GM12878 (cell line): ENCODE measurements at regions of chr15 and their contacts with region 1.

Region 1: DNA sequence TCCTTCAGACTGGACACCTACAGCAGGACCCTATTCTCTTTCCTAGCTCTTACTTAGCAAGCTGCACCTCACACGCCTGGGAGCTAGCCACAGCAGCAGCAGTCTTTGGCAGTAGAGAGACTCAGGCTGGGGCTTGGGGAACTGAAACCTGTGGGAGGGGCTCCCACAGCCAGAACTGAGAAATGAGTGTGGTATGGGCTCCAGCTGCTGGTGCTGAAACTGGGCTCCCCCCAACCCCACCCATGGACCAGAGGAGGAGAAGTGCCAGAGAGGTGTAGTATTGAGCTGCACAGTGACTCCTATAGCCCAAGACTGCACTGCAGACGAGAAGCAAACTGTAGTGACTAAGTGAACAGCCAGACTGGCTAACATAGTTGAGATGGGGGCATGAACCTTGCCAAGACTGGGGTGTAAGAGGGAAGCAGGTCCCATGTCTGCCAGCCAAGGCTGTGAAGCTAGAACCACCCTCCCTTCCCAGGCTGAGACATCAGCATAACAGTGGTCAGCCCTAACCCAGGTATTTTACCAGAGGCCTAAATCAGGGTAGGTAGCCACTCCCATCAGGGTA is 62.5 kb downstream of the MYO5A start:
- DNase-seq: peak; percentile 97
- ATAC-seq: peak; percentile 94
- H3K4me3 ChIP-seq: peak overlapping the region; percentile 58; the same call in 1 of the 2 replicates
- H3K27ac ChIP-seq: peak overlapping the region; percentile 99
- H3K4me1 ChIP-seq: peaks cover 47% of the 10 kb centered on the region
- H3K27me3 ChIP-seq: no peaks in the 10 kb centered on the region
- CTCF ChIP-seq: peak; percentile 55 to 66 (median 66)
- EP300 ChIP-seq: peak; percentile 91 to 98
- POLR2A ChIP-seq: peak; percentile 69
- RAD21 ChIP-seq: peak; percentile 70

Region 2: DNA sequence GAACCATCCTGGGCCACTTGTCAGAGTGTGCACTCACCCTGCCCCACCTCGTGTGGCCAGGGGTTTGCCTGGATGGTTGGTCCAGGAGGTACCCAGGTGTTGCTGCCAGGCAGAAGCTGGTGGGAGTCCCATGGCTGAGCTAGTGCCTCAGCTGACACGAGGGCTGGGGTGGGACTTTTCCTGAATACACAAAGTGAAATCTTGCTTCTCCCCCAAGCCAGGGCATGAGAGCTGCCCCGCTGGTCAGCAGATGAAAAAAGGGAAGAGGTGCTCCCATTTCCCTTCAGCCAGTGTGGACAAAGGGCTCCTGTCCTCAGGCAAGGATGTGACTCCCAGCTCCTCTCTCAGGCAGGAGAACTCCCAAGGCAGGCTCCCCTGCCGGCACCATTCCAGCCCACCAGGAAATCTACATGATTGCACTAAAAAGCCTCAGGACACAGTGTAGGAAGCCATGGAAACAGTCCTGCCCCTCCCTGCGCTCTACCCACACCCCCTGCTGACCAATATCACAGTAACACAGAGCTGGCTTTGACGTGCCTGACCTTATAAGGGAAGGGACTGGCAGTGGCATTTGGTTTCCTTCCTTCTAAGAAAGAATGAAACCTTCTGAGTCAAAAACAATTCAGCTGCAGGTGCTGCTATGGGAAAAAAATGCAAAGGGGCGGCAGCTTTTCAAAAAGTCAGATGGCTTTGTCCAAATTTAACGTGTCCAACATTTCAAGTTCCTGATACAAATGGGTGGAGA is 204.5 kb before region 1 on chr15:
- CTCF ChIA-PET with region 1: interaction called, 98 read pairs
- POLR2A ChIA-PET with region 1: interaction called, 4 read pairs
- RAD21 ChIA-PET with region 1: interaction called, 32 read pairs
- SMC1A ChIA-PET with region 1: interaction called, 30 read pairs
- in situ Hi-C with region 1: no loop called
- intact Hi-C with region 1: loop called (anchors 5 kb)
- DNase-seq: peak; percentile 86
- ATAC-seq: peak; percentile 100
- H3K4me3 ChIP-seq: no peak overlapping the region
- H3K27ac ChIP-seq: peak overlapping the region; percentile 95
- H3K4me1 ChIP-seq: peaks cover 24% of the 10 kb centered on the region
- H3K27me3 ChIP-seq: no peaks in the 10 kb centered on the region
- CTCF ChIP-seq: peak in 2 of 3 experiments; percentile 24 to 25; a peak in 1 of 6 replicates
- EP300 ChIP-seq: 0 out of 4 replicates have a peak, but pooled peaks have one; percentile 31 to 59
- POLR2A ChIP-seq: no peak; the same call in 1 of the 2 replicates
- RAD21 ChIP-seq: no peak

Region 3: DNA sequence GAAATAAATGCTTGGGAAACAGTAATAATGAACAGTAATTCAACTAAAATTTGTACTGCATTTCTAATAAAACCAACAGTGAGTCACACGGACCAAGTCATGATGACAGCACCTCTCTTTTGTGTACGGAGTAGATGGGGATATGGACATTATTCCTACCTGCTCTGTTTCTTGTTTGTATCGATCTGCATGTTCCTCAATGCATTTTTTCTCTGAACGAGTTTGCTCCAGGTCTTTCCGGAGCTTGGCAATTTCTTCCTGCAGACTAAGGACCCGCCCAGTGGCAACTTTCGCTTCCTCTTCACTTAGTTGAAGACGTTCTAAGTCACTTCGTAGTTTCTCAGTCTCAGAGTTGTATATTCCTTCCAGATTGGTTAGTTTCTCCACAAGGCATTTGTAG is 96.2 kb before region 1 on chr15:
- CTCF ChIA-PET with region 1: interaction called, 5 read pairs
- POLR2A ChIA-PET with region 1: interaction called, 3 read pairs
- RAD21 ChIA-PET with region 1: interaction called, 29 read pairs
- SMC1A ChIA-PET with region 1: interaction called, 21 read pairs
- in situ Hi-C with region 1: no loop called
- intact Hi-C with region 1: no loop called
- DNase-seq: no peak
- ATAC-seq: peak; percentile 83
- H3K4me3 ChIP-seq: no peak overlapping the region
- H3K27ac ChIP-seq: peak overlapping the region; percentile 5; the same call in 1 of the 2 replicates
- H3K4me1 ChIP-seq: peaks cover 3% of the 10 kb centered on the region; the same call in 1 of the 2 replicates
- H3K27me3 ChIP-seq: no peaks in the 10 kb centered on the region
- CTCF ChIP-seq: no peak
- EP300 ChIP-seq: no peak
- POLR2A ChIP-seq: no peak
- RAD21 ChIP-seq: no peak

Region 4: DNA sequence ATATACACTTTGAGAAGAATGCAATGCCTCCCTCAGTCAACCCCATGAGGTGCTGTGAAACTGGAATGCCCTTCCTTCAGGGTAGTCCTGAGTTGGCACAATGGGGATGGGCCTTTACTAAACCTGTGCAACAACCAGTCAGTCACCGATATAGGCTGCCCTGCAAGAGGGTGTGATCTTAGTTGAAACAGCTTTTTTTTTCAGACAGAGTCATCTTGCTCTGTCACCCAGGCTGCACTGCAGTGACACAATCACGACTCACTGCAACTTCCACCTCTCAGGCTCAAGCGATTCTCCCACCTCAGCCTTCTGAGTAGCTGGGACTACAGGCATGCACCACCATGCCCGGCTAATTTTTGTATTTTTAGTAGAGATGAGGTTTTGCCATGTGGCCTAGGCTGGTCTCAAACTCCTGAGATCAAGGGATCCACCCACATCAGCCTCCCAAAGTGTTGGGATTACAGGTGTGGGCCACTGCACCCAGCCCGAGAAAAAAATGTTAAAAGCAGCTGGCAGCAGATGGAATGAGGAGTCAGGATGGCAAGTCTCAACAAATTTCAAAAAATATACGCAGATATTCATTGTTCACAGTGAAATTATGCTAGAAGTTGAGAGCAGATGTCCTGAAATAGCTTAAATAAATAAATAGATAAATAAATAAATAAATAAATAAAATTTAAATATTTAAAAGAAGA is 30.7 kb after region 1 on chr15:
- CTCF ChIA-PET with region 1: interaction called, 18 read pairs
- POLR2A ChIA-PET with region 1: no interaction called
- RAD21 ChIA-PET with region 1: interaction called, 5 read pairs
- SMC1A ChIA-PET with region 1: interaction called, 9 read pairs
- in situ Hi-C with region 1: no loop called
- intact Hi-C with region 1: loop called (anchors 5 kb)
- DNase-seq: no peak
- ATAC-seq: peak; percentile 70
- H3K4me3 ChIP-seq: no peak overlapping the region
- H3K27ac ChIP-seq: no peak overlapping the region
- H3K4me1 ChIP-seq: no peaks in the 10 kb centered on the region; the same call in 1 of the 2 replicates
- H3K27me3 ChIP-seq: no peaks in the 10 kb centered on the region
- CTCF ChIP-seq: no peak
- EP300 ChIP-seq: no peak
- POLR2A ChIP-seq: no peak
- RAD21 ChIP-seq: no peak

Region 5: GRCh38 chr15:52551762-52552161 is 85.5 kb after region 1 on chr15:
- CTCF ChIA-PET with region 1: interaction called, 4 read pairs
- POLR2A ChIA-PET with region 1: no interaction called
- RAD21 ChIA-PET with region 1: interaction called, 24 read pairs
- SMC1A ChIA-PET with region 1: interaction called, 5 read pairs
- in situ Hi-C with region 1: no loop called
- intact Hi-C with region 1: no loop called
- DNase-seq: no peak
- ATAC-seq: no peak
- H3K4me3 ChIP-seq: no peak overlapping the region
- H3K27ac ChIP-seq: no peak overlapping the region
- H3K4me1 ChIP-seq: peaks cover 12% of the 10 kb centered on the region
- H3K27me3 ChIP-seq: no peaks in the 10 kb centered on the region
- CTCF ChIP-seq: no peak
- EP300 ChIP-seq: no peak
- POLR2A ChIP-seq: no peak
- RAD21 ChIP-seq: no peak

Region 6: DNA sequence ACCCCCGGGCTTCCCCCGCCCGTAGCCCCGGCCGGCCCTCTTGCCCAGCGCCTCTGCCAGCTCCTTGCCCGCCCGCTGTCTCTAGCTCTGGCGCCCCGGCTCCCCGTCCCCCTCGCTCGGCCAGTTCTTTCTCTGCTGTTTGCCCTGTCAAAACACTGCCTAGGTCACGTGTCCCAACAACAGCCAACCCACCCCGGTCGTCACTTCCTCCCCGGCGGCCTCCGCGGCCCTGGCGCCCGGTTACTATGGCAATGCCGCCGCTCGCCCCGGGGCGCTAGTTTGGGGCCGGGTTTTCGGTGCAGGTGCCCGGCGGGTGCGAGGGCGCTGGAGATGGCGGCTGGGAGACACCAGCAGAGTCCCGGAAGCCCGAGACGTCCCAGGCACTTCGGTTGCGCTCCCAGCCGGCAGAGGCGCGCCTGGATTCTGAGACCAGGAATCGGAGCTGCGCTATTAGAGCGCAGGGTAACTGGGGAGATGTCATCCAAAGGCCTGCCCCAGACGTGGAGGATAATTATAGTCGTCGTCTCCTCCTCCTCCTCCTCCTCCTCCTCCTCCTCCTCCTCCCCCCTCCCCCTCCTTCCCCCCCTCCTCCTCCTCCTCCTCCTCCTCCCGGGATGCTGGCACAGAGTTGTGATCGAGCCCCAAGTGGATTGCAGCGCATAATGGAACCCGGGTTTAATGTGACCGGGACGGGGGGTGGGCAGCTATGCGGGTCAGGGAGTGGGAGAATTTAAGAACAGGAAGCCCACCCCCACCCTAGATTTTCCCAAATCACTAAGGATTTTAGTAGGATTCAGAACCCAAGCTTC is 213.2 kb after region 1 on chr15 and contains the start of gene ATOSA:
- CTCF ChIA-PET with region 1: interaction called, 5 read pairs
- POLR2A ChIA-PET with region 1: interaction called, 4 read pairs
- RAD21 ChIA-PET with region 1: interaction called, 8 read pairs
- SMC1A ChIA-PET with region 1: interaction called, 8 read pairs
- in situ Hi-C with region 1: no loop called
- intact Hi-C with region 1: loop called (anchors 10 kb)
- DNase-seq: peak; percentile 48
- ATAC-seq: peak; percentile 84
- H3K4me3 ChIP-seq: peak within 1 kb of the TSS; percentile 93
- H3K27ac ChIP-seq: peak within 1 kb of the TSS; percentile 84
- H3K4me1 ChIP-seq: peaks cover 43% of the 10 kb centered on the region
- H3K27me3 ChIP-seq: no peaks in the 10 kb centered on the region
- CTCF ChIP-seq: no peak
- EP300 ChIP-seq: no peak
- POLR2A ChIP-seq: peak; percentile 74
- RAD21 ChIP-seq: no peak
- polyA plus RNA-seq, gene ATOSA: 6.8 to 7.9 TPM